Activated naive CD4-positive, alpha-beta T cell treated with anti-CD3 and anti-CD28 coated beads for 36 hours (primary cell): ENCODE measurements at regions of chr15 and their contacts with region 1.

Region 1: DNA sequence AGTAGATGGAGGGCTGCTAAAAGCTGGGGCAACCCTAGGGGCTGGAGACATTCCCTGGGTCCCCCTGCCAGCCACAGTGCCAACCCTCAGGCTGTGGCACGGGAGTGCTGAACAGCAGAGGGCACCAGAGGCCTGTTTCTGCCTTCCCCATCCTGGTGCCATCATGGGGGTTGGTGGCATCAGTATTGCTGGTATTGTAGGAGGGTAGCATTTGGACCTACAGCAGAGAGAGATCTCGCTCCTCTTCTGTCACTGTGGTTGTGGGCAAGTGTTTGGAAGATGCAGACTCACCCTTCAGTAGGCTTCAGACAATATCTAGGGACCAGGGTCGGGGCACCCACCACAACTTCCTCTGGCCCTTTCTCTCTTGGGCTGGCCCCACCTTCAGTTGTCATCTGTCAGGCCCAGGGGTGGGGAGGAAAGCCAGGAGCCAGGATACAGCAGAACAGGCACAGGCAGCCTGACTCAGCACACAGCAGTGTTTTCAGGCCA is 123.5 kb downstream of the RPLP1 start:
- DNase-seq: peak; percentile 82
- H3K4me3 Mint-ChIP-seq: no peak overlapping the region
- H3K27ac Mint-ChIP-seq: peak overlapping the region; percentile 17
- H3K4me1 Mint-ChIP-seq: peaks cover 30% of the 10 kb centered on the region
- H3K27me3 Mint-ChIP-seq: no peaks in the 10 kb centered on the region

Region 2: GRCh38 chr15:69475769-69476358 is 100.2 kb before region 1 on chr15:
- CTCF ChIA-PET with region 1: interaction called, 3 read pairs
- intact Hi-C with region 1: loop called (anchors 2 kb)
- DNase-seq: peak; percentile 82
- H3K4me3 Mint-ChIP-seq: no peak overlapping the region
- H3K27ac Mint-ChIP-seq: no peak overlapping the region
- H3K4me1 Mint-ChIP-seq: no peaks in the 10 kb centered on the region
- H3K27me3 Mint-ChIP-seq: no peaks in the 10 kb centered on the region

Region 3: DNA sequence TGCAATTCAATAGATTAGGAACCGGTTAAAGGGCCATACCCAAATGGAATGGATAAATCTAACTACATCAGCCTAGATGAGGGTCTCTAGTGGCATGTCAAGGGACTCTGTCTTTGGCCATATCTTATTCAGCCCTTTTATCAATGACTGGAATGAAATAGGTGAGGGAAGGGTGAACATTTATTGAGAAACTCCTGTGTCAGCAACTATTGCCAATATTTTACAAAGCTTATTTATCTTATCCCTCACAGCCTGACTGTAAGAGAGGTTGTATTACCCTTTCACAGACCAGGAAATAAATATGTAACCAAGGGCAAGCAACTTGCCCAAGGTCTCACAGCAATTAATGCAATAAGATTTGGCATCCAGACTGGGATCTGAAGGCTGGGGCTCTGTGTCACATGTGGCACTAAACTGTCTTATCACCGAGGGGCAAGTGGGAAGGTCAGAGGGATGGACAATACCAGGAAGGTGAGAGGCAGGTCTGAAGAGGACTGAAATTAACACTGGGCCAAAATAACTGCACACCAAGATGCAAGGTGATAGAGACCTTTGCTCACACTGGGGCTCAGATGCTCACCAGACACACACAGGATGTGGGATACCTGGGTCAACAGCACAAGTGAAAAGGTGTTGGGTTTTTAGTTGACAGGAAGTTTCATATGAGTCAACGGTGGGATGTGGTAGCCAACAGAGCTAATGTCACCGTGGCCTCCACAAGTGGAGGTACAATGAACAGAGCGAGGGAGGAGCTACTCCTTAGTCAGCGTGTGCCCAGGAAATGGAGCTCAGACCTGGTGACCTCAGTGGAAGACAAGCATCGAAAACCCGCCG is 137.9 kb after region 1 on chr15:
- CTCF ChIA-PET with region 1: interaction called, 3 read pairs
- intact Hi-C with region 1: loop called (anchors 1 kb)
- DNase-seq: peak; percentile 90
- H3K4me3 Mint-ChIP-seq: no peak overlapping the region
- H3K27ac Mint-ChIP-seq: peak overlapping the region; percentile 73
- H3K4me1 Mint-ChIP-seq: peaks cover 55% of the 10 kb centered on the region
- H3K27me3 Mint-ChIP-seq: no peaks in the 10 kb centered on the region

Region 4: DNA sequence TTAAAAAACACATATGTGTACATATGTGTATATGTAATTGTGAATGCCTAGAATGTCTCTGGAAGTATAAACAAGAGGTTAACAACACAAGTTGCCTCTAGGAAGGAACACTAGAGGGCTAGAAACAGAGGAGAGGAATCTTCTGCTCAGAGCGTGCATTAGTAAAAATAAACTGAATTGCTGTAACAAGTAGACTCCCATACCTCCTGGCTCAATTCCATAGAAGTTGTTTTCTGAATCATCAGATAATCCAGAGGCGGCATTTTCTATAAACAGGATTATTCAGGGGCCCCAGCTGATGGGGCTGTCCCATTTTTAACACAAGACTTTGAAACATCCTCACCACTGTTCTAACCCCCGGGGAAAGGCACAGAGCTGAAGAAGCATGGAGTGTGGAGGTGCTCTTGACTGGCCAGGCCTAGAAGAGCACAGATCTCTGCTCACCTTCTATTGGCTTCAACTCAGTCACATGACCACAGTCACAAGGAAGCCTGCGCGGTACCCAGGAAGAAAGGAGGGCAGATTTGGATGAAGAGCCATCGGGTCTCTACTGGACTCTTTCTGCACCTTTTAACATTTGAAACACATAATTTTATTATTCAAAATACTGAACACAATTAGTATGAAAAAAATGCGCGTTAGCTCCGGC is 375.9 kb after region 1 on chr15:
- CTCF ChIA-PET with region 1: no interaction called
- intact Hi-C with region 1: loop called (anchors 10 kb)
- DNase-seq: no peak
- H3K4me3 Mint-ChIP-seq: no peak overlapping the region
- H3K27ac Mint-ChIP-seq: no peak overlapping the region
- H3K4me1 Mint-ChIP-seq: peaks cover 3% of the 10 kb centered on the region
- H3K27me3 Mint-ChIP-seq: no peaks in the 10 kb centered on the region

Region 5: DNA sequence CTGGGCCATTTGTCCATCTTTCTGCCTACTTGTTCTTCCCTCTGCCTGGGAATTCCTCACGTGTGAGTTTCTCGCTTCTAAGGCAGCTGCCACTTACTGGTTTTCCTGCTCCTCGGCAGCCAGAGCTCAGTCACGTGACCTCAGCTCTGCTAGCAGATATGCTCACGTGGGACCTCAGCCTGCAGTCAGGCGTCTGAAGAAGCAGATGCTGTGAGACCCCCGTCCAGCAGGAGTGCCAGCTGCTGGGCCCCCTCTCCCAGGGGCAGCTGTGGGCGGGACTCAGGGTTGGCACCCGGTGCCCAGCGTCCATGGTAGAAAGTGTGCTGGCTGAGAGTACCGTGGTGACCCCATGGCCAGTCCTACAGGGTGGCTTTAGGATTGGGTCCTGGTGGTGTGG is 682.9 kb after region 1 on chr15:
- CTCF ChIA-PET with region 1: no interaction called
- intact Hi-C with region 1: loop called (anchors 5 kb)
- DNase-seq: peak; percentile 38
- H3K4me3 Mint-ChIP-seq: peak overlapping the region; percentile 13
- H3K27ac Mint-ChIP-seq: no peak overlapping the region
- H3K4me1 Mint-ChIP-seq: peaks cover 39% of the 10 kb centered on the region
- H3K27me3 Mint-ChIP-seq: no peaks in the 10 kb centered on the region